AG04450 (cell line): ENCODE measurements at regions of chr6 and their contacts with region 1.

Region 1: DNA sequence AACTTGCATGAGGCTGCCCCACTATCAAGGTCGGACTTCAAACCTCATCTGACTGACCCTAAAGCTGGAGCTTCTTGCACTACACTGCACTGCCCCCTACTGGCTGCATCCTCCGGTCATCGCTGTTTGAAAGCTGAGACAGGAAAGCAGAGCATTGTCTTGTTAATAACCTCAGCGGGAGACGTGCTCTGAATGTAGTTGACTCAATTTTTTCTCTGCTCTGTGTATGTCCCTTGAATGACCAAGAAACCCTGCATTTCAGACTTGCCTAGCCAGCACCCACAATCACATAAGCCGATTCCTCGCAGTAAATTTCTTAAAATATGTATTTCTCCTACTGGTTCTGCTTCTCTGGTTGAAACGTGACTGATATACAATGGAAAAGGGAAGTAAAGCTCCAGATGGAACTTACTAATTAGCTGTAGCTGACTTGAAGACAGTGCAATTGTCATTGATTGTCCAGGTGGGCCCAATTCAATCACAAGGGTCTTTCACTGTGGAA is 27.8 kb downstream of the TCF21 start:
- DNase-seq: peak; percentile 89
- H3K4me3 ChIP-seq: no peak overlapping the region
- H3K27ac ChIP-seq: no peak overlapping the region
- H3K27me3 ChIP-seq: no peaks in the 10 kb centered on the region
- CTCF ChIP-seq: peak; percentile 97

Region 2: GRCh38 chr6:133631421-133631820 is 285.3 kb before region 1 on chr6:
- CTCF ChIA-PET with region 1: interaction called, 12 read pairs
- POLR2A ChIA-PET with region 1: no interaction called
- DNase-seq: no peak
- H3K4me3 ChIP-seq: no peak overlapping the region
- H3K27ac ChIP-seq: no peak overlapping the region
- H3K27me3 ChIP-seq: no peaks in the 10 kb centered on the region
- CTCF ChIP-seq: peak; percentile 42

Region 3: DNA sequence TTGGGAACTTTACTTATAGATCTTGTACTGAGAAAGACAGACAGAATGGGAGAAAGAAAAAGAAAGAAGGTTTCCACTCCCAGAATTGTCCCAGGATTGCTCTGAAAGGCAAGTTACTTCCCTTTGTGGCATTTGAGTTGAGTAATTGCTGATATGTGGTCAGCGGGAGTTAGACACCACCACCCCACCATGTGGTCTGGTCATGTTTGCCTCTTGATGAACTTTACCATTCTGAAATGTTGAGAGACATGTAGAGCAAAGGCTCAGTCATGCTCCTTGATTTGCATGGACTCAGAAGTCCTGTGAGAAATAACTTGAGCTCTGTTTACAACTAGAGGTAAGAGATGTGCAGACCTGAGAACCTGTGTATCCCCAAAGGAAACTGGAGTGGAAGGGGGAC is 10.7 kb before region 1 on chr6:
- CTCF ChIA-PET with region 1: interaction called, 22 read pairs
- POLR2A ChIA-PET with region 1: no interaction called
- DNase-seq: no peak
- H3K4me3 ChIP-seq: no peak overlapping the region
- H3K27ac ChIP-seq: no peak overlapping the region
- H3K27me3 ChIP-seq: no peaks in the 10 kb centered on the region
- CTCF ChIP-seq: no peak

Region 4: DNA sequence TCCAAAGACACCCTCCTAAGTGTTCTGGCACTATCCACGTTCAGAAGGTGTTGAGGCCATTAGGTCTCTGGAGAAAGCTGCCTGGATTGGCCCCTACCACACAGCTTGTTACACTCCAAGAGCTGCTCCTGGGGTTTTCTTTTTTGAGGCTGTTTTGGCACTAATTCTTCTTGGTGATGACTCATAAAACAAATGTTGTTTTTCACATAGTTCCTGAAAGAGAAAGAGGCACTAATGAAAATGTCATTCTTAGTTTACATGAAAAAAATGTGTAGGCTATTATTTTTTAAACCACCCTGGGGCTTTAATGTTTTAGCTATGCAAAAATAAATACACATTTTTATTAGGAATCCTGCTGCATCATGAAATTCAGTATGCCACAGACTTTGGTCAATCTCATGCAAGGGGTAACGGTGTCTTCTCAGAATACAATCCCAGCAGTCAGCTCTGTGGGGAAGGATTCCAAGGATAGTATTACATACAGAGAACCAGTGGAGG is 74.4 kb after region 1 on chr6:
- CTCF ChIA-PET with region 1: no interaction called
- POLR2A ChIA-PET with region 1: no interaction called
- DNase-seq: peak; percentile 61
- H3K4me3 ChIP-seq: no peak overlapping the region
- H3K27ac ChIP-seq: peak overlapping the region; percentile 53
- H3K27me3 ChIP-seq: no peaks in the 10 kb centered on the region
- CTCF ChIP-seq: no peak

Region 5: GRCh38 chr6:134117370-134117807 is 200.7 kb after region 1 on chr6:
- CTCF ChIA-PET with region 1: no interaction called
- POLR2A ChIA-PET with region 1: no interaction called
- DNase-seq: no peak
- H3K4me3 ChIP-seq: no peak overlapping the region
- H3K27ac ChIP-seq: no peak overlapping the region
- H3K27me3 ChIP-seq: no peaks in the 10 kb centered on the region
- CTCF ChIP-seq: no peak